ENCODE measurements at regions of chr16 and their contacts with region 1.

Region 1: GRCh38 chr16:85162478-85163277 is 50.4 kb upstream of the CIBAR2 start:
- DNase-seq: peak; percentile 82 to 89 (median 86)
- ATAC-seq: peak; percentile 66 to 74
- H3K4me3 ChIP-seq: no peak overlapping the region
- H3K27ac ChIP-seq: peak overlapping the region; percentile 46
- H3K4me1 ChIP-seq: peaks cover 20% of the 10 kb centered on the region
- H3K27me3 ChIP-seq: no peaks in the 10 kb centered on the region

Region 2: DNA sequence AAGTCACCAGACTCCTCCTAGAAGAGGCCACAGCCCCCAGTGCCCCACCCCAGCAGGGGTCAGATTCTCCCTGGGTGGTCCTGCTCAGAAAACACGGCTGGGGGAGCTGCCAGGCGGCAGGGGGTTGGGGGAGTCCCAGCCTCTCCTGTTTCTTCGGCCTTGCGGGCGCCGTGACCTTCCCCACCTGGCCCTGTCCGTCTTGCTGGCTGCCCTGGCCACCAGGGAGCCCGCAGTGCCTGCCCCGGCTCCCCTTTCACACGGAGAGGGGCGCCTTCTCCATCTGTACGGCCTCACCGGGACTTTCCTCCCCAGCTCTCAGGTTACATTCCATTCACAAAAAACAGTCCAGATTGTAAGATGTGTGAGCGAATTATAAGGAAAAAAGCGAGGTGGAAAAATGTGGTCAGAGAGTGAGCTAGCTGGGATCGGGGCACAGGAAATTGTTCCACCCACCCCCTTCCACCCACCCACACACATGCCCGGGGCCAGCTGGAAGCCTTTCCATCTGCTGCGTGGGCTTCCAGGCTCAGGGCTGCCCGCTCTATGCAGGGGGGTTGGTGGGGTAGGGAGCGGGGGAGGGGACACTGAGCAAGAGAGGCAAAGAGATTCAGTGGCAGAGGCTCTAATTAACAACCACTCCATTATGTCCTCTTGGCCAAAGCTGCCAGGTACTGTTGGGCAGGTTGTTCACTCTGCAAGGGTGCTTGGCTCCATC is 35.8 kb before region 1 on chr16:
- intact Hi-C with region 1: loop called in 1 of 4 experiments (anchors 5 kb)
- DNase-seq: peak in 2 of 3 donors; percentile 62 to 64
- ATAC-seq: peak; percentile 20 to 47
- H3K4me3 ChIP-seq: no peak overlapping the region
- H3K27ac ChIP-seq: no peak overlapping the region
- H3K4me1 ChIP-seq: peaks cover 8% of the 10 kb centered on the region
- H3K27me3 ChIP-seq: no peaks in the 10 kb centered on the region

Region 3: DNA sequence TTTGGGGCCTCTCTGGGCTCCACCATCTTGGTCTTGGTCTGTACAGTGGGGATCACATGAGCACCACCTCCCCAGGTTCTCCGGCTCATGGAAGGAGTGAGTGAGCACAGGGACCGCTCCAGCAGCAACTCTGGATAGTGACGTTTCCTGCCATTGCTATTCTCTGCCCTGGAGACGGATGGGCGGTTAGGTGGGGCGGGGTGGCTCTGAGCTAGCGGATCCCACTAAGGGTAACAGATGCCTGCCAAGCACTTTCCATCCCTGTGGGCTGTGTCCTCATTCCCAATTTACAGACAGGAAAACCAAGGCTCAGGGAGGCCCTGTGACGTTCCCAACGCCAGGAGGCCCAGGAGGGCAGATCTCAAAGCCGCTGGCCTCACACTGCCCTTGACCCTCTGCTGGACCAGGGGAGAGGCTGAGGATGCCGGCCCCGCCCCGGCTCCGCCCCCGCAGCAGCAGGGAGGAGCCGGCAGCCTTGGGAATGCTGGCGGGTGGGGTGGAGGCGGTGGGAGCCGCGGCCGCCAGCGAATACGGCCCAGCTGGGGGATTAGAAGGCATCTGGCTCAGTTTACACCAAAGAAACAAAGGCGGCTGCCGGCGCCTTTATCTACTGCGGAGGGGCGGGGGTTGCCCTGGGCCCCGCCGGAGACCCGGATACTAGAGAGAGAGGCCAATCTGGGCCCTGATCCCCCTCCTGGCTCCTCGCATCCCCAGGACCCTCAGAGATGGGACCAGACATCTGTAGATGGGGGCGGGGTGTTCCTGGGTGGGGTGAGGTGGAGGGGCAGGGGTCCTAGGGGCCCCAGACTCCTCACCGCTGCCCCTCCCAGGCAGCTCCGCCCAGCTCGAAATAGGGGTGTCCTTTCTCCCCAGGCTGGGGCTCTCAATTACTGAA is 71.9 kb after region 1 on chr16:
- intact Hi-C with region 1: loop called in 1 of 4 experiments (anchors 5 kb)
- DNase-seq: peak; percentile 81 to 93 (median 93)
- ATAC-seq: peak; percentile 77 to 78
- H3K4me3 ChIP-seq: peak overlapping the region; percentile 26
- H3K27ac ChIP-seq: no peak overlapping the region
- H3K4me1 ChIP-seq: peaks cover 6% of the 10 kb centered on the region
- H3K27me3 ChIP-seq: no peaks in the 10 kb centered on the region

Region 4: GRCh38 chr16:85615852-85616606 is 453.4 kb after region 1 on chr16:
- intact Hi-C with region 1: no loop called
- DNase-seq: peak; percentile 82 to 94 (median 91)
- ATAC-seq: peak; percentile 1 to 3
- H3K4me3 ChIP-seq: no peak overlapping the region
- H3K27ac ChIP-seq: peak overlapping the region; percentile 74
- H3K4me1 ChIP-seq: peaks cover 19% of the 10 kb centered on the region
- H3K27me3 ChIP-seq: no peaks in the 10 kb centered on the region